GM12878 (cell line): ENCODE measurements at regions of chr7 and their contacts with region 1.

Region 1: GRCh38 chr7:123865517-123866117 is 20.6 kb downstream of the HYAL4 start:
- DNase-seq: peak; percentile 21
- ATAC-seq: peak; percentile 93
- H3K4me3 ChIP-seq: no peak overlapping the region
- H3K27ac ChIP-seq: no peak overlapping the region
- H3K4me1 ChIP-seq: no peaks in the 10 kb centered on the region
- H3K27me3 ChIP-seq: no peaks in the 10 kb centered on the region
- CTCF ChIP-seq: peak; percentile 54 to 57 (median 57); a peak in 5 of 6 replicates
- EP300 ChIP-seq: no peak
- POLR2A ChIP-seq: no peak
- RAD21 ChIP-seq: peak; percentile 73

Region 2: DNA sequence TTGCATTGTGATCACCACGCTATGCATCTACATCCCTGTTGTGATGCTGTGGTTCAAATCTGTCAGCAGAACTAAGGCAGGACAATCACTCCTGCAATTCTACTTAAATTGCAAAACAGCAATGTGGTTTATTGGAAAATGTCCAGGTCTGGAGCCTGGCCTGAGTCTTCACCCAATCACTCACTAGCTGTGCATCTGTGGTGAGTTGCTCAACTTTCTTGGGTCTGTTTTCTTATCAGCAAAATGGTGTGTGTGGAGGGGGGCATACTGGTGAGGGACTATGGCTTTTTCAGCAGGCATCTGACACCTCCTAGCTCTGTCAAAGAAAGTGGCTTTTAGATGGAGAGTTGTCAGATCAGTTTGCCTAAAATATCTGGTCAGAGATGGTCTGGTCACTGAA is 1452.7 kb before region 1 on chr7:
- CTCF ChIA-PET with region 1: no interaction called
- POLR2A ChIA-PET with region 1: no interaction called
- RAD21 ChIA-PET with region 1: no interaction called
- SMC1A ChIA-PET with region 1: no interaction called
- in situ Hi-C with region 1: no loop called
- intact Hi-C with region 1: no loop called
- DNase-seq: no peak
- ATAC-seq: no peak
- H3K4me3 ChIP-seq: no peak overlapping the region
- H3K27ac ChIP-seq: no peak overlapping the region
- H3K4me1 ChIP-seq: no peaks in the 10 kb centered on the region
- H3K27me3 ChIP-seq: no peaks in the 10 kb centered on the region
- CTCF ChIP-seq: no peak
- EP300 ChIP-seq: no peak
- POLR2A ChIP-seq: no peak
- RAD21 ChIP-seq: no peak

Region 3: GRCh38 chr7:123327661-123328060 is 538.0 kb before region 1 on chr7:
- CTCF ChIA-PET with region 1: no interaction called
- POLR2A ChIA-PET with region 1: no interaction called
- RAD21 ChIA-PET with region 1: no interaction called
- SMC1A ChIA-PET with region 1: no interaction called
- in situ Hi-C with region 1: no loop called
- intact Hi-C with region 1: no loop called
- DNase-seq: no peak
- ATAC-seq: no peak
- H3K4me3 ChIP-seq: no peak overlapping the region
- H3K27ac ChIP-seq: no peak overlapping the region
- H3K4me1 ChIP-seq: no peaks in the 10 kb centered on the region
- H3K27me3 ChIP-seq: no peaks in the 10 kb centered on the region
- CTCF ChIP-seq: no peak
- EP300 ChIP-seq: no peak
- POLR2A ChIP-seq: no peak
- RAD21 ChIP-seq: no peak

Region 4: DNA sequence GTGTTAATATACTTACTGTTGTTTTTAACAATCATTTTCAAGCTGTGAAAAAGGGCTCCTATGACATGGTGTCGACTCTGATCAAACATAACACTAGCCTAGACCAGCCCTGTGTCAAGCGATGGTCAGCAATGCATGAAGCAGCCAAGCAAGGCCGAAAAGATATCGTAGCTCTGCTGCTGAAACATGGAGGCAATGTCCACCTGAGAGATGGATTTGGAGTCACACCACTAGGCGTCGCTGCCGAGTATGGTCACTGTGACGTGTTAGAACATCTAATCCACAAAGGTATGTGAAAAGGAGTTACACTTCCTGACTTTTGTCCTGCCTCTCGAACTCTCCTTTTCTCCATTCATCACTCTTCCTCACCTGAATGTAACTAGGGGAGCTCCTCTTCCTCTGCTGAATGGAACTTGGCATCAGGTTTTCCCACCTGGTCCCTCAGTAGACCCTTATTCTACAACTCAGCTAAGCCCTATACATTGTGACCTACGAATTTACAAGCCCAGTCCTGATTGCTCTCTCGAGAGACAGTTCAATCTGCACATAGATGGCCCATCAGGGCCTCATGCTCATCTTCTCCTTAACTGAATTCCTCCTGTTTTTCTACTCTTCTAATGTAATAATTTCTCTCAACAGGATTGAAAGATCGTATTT is 241.0 kb before region 1 on chr7:
- CTCF ChIA-PET with region 1: interaction called, 26 read pairs
- POLR2A ChIA-PET with region 1: no interaction called
- RAD21 ChIA-PET with region 1: interaction called, 3 read pairs
- SMC1A ChIA-PET with region 1: interaction called, 7 read pairs
- in situ Hi-C with region 1: no loop called
- intact Hi-C with region 1: no loop called
- DNase-seq: peak; percentile 25
- ATAC-seq: peak; percentile 97
- H3K4me3 ChIP-seq: no peak overlapping the region
- H3K27ac ChIP-seq: no peak overlapping the region
- H3K4me1 ChIP-seq: no peaks in the 10 kb centered on the region
- H3K27me3 ChIP-seq: no peaks in the 10 kb centered on the region
- CTCF ChIP-seq: peak; percentile 68 to 94 (median 91)
- EP300 ChIP-seq: no peak
- POLR2A ChIP-seq: no peak
- RAD21 ChIP-seq: peak; percentile 40

Region 5: GRCh38 chr7:123682690-123683089 is 182.9 kb before region 1 on chr7:
- CTCF ChIA-PET with region 1: interaction called, 24 read pairs
- POLR2A ChIA-PET with region 1: no interaction called
- RAD21 ChIA-PET with region 1: interaction called, 6 read pairs
- SMC1A ChIA-PET with region 1: interaction called, 30 read pairs
- in situ Hi-C with region 1: loop called (anchors 5 kb)
- intact Hi-C with region 1: loop called (anchors 1 kb)
- DNase-seq: no peak
- ATAC-seq: peak; percentile 81
- H3K4me3 ChIP-seq: no peak overlapping the region
- H3K27ac ChIP-seq: no peak overlapping the region
- H3K4me1 ChIP-seq: no peaks in the 10 kb centered on the region
- H3K27me3 ChIP-seq: no peaks in the 10 kb centered on the region
- CTCF ChIP-seq: peak; percentile 35 to 61 (median 46); a peak in 5 of 6 replicates
- EP300 ChIP-seq: no peak
- POLR2A ChIP-seq: no peak
- RAD21 ChIP-seq: peak; percentile 74

Region 6: DNA sequence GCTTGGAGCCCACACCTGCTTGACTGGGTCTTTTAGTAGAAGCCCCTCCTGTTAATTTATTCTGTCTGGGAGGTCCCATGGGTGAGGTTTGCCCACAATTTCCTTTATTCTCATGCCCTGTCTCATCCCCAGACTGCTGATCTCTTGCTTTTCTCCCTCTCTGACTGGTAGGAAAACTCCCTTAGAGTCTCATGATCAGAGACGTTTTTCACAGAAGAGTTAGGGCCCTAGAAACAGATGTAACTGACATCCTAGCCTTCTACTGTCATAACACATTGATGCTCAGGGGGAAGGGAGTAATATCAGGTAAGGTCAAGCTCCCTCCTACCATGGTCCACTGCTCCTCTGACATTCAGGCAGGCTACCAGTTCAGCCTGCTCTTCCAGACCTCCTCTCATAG is 73.1 kb before region 1 on chr7:
- CTCF ChIA-PET with region 1: interaction called, 208 read pairs
- POLR2A ChIA-PET with region 1: interaction called, 6 read pairs
- RAD21 ChIA-PET with region 1: interaction called, 115 read pairs
- SMC1A ChIA-PET with region 1: interaction called, 151 read pairs
- in situ Hi-C with region 1: no loop called
- intact Hi-C with region 1: no loop called
- DNase-seq: no peak
- ATAC-seq: peak; percentile 75
- H3K4me3 ChIP-seq: no peak overlapping the region
- H3K27ac ChIP-seq: no peak overlapping the region
- H3K4me1 ChIP-seq: no peaks in the 10 kb centered on the region
- H3K27me3 ChIP-seq: no peaks in the 10 kb centered on the region
- CTCF ChIP-seq: no peak
- EP300 ChIP-seq: no peak
- POLR2A ChIP-seq: no peak
- RAD21 ChIP-seq: no peak

Region 7: DNA sequence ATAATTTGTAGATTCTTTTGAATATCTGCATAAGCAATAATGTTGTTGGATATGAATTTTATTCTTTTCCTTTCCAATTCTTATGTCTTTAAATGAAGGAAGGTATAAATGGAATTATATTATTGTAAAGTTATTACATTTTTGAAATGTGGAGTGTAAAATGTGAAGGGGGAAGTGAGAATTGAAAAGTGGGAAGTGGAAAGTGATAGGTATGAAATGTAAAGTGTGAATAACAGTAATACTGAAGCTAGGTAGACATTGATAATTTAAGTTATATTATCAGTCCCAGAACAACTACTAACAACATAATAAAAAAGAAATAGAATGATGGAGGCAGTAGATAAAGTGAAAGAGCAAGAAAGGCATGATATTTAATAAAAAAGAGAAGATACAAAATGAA is 60.3 kb before region 1 on chr7:
- CTCF ChIA-PET with region 1: interaction called, 208 read pairs
- POLR2A ChIA-PET with region 1: interaction called, 10 read pairs
- RAD21 ChIA-PET with region 1: interaction called, 115 read pairs
- SMC1A ChIA-PET with region 1: interaction called, 151 read pairs
- in situ Hi-C with region 1: no loop called
- intact Hi-C with region 1: no loop called
- DNase-seq: no peak
- ATAC-seq: 0 out of 3 replicates have a peak, but pooled peaks have one; percentile 43
- H3K4me3 ChIP-seq: no peak overlapping the region
- H3K27ac ChIP-seq: no peak overlapping the region
- H3K4me1 ChIP-seq: no peaks in the 10 kb centered on the region
- H3K27me3 ChIP-seq: no peaks in the 10 kb centered on the region
- CTCF ChIP-seq: no peak
- EP300 ChIP-seq: no peak
- POLR2A ChIP-seq: no peak
- RAD21 ChIP-seq: no peak

Region 8: GRCh38 chr7:123823898-123824753 is 41.5 kb before region 1 on chr7:
- CTCF ChIA-PET with region 1: interaction called, 46 read pairs
- POLR2A ChIA-PET with region 1: no interaction called
- RAD21 ChIA-PET with region 1: interaction called, 10 read pairs
- SMC1A ChIA-PET with region 1: interaction called, 23 read pairs
- in situ Hi-C with region 1: no loop called
- intact Hi-C with region 1: no loop called
- DNase-seq: peak; percentile 42
- ATAC-seq: peak; percentile 97
- H3K4me3 ChIP-seq: no peak overlapping the region
- H3K27ac ChIP-seq: peak overlapping the region; percentile 71
- H3K4me1 ChIP-seq: peaks cover 11% of the 10 kb centered on the region
- H3K27me3 ChIP-seq: no peaks in the 10 kb centered on the region
- CTCF ChIP-seq: no peak
- EP300 ChIP-seq: peak in 1 of 2 experiments; percentile 56; a peak in 2 of 4 replicates
- POLR2A ChIP-seq: no peak
- RAD21 ChIP-seq: no peak